Natural killer cell (primary cell): ENCODE measurements at regions of chr5 and their contacts with region 1.

Region 1: GRCh38 chr5:173615884-173616576 is 420 bp downstream of the BOD1 start:
- DNase-seq: peak; percentile 61 to 87
- ATAC-seq: peak; percentile 59 to 78 (median 61)
- H3K4me3 ChIP-seq: peak overlapping the region; percentile 77
- H3K4me3 Mint-ChIP-seq: peak overlapping the region; percentile 84
- H3K27ac ChIP-seq: peak overlapping the region; percentile 84
- H3K27ac Mint-ChIP-seq: peak overlapping the region; percentile 88 to 93
- H3K4me1 ChIP-seq: peaks cover 11% of the 10 kb centered on the region
- H3K4me1 Mint-ChIP-seq: peaks cover 28 to 32% of the 10 kb centered on the region in 2 donors
- H3K27me3 ChIP-seq: no peaks in the 10 kb centered on the region
- H3K27me3 Mint-ChIP-seq: no peaks in the 10 kb centered on the region
- CTCF ChIP-seq: peak; percentile 73

Region 2: DNA sequence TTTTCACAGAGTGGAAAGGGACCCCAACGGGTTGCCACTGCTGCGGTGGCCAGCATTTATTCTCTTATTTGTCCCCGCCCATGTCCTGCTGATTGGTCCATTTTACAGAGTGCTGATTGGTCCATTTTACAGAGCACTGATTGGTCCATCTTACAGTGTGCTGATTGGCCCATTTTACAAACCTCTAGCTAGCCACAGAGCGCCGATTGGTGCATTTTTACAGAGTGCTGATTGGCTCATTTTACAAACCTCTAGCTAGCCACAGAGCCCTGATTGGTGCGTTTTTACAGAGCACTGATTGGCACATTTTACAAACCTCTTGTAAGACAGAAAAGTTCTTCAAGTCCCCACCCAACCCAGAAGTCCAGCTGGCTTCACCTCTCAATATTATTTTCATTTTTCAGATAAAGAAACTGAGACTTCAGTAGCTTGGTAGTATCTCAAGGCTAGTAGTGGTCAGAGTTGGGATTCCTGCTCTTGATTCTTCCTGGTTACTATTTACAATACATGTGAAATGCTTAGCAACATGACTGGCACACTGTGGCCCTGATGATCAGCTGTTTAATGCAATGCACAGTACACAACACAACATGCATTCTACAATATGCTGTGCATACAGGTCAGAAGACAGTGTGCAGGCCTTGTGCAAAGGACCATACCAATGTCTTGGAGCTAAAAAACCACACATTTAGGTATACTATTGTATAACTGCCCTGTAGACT is 64.0 kb after region 1 on chr5:
- intact Hi-C with region 1: no loop called
- DNase-seq: no peak
- ATAC-seq: peak in 1 of 3 donors; percentile 41
- H3K4me3 ChIP-seq: no peak overlapping the region
- H3K4me3 Mint-ChIP-seq: no peak overlapping the region
- H3K27ac ChIP-seq: peak overlapping the region; percentile 27
- H3K27ac Mint-ChIP-seq: no peak overlapping the region
- H3K4me1 ChIP-seq: no peaks in the 10 kb centered on the region
- H3K4me1 Mint-ChIP-seq: no peaks in the 10 kb centered on the region
- H3K27me3 ChIP-seq: no peaks in the 10 kb centered on the region
- H3K27me3 Mint-ChIP-seq: peaks cover 0 to 5% of the 10 kb centered on the region in 2 donors
- CTCF ChIP-seq: no peak

Region 3: GRCh38 chr5:173887610-173888472 is 271.8 kb after region 1 on chr5 and contains the start of gene CPEB4:
- intact Hi-C with region 1: loop called (anchors 1 kb)
- DNase-seq: peak; percentile 94 to 100
- ATAC-seq: peak; percentile 94 to 98 (median 94)
- H3K4me3 ChIP-seq: peak within 1 kb of the TSS; percentile 95
- H3K4me3 Mint-ChIP-seq: peak within 1 kb of the TSS; percentile 99
- H3K27ac ChIP-seq: peak within 1 kb of the TSS; percentile 83
- H3K27ac Mint-ChIP-seq: peak within 1 kb of the TSS; percentile 99
- H3K4me1 ChIP-seq: peaks cover 42% of the 10 kb centered on the region
- H3K4me1 Mint-ChIP-seq: peaks cover 79 to 83% of the 10 kb centered on the region in 2 donors
- H3K27me3 ChIP-seq: no peaks in the 10 kb centered on the region
- H3K27me3 Mint-ChIP-seq: no peaks in the 10 kb centered on the region
- CTCF ChIP-seq: no peak
- total RNA-seq, gene CPEB4: 44.4 to 60.4 (median 55.1) TPM

Region 4: DNA sequence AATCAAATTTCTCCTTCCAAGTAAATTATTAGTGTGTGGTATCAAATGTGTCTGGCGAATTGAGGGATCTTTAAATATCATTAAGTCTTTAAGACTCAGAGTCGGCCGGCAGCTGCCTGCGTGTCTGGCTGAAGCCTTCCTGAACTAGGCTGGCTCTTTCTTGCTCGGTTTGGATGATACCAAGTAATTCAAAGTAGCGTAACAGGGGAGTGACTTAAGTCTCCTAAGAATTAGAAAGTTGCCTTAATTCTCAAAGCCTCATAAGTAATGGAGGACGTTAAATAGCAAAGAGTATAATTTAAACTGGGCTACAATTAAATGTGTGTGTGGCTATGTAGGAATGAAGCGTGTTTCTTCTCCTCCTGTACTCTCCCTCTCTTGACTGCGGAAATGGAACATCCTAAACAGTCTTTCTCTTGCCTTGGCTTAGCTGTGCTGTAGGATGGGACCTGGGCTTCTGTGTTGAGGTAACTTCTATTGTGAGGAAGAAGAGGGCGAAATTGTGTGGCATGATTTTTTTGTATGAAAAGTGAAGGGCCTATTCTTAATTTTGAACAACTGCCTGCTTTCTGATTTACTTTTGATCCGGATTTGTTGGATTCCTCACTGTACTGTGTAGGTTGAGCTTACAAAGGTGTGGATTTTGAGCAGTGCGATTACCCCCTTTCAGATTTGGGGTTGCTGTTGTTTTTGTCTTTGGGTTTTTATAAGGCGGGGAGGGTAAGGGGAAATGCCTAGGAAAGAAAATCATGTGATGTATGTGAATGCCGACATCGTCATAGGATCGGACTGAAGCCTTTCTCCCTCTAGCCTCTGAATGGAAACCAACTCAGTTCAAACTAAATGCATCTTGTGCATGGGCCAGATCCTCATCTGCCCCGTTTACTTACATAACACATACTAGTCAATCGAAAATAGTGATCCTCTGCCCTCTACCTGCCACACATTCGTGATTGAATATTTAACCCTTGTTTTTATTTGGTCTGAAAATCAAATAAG is 302.1 kb after region 1 on chr5:
- intact Hi-C with region 1: loop called (anchors 1 kb)
- DNase-seq: peak; percentile 32 to 86
- ATAC-seq: peak; percentile 87 to 93 (median 90)
- H3K4me3 ChIP-seq: peak overlapping the region; percentile 36
- H3K4me3 Mint-ChIP-seq: no peak overlapping the region
- H3K27ac ChIP-seq: peak overlapping the region; percentile 79
- H3K27ac Mint-ChIP-seq: no peak overlapping the region
- H3K4me1 ChIP-seq: peaks cover 4% of the 10 kb centered on the region
- H3K4me1 Mint-ChIP-seq: no peaks in the 10 kb centered on the region
- H3K27me3 ChIP-seq: no peaks in the 10 kb centered on the region
- H3K27me3 Mint-ChIP-seq: no peaks in the 10 kb centered on the region
- CTCF ChIP-seq: no peak

Region 5: DNA sequence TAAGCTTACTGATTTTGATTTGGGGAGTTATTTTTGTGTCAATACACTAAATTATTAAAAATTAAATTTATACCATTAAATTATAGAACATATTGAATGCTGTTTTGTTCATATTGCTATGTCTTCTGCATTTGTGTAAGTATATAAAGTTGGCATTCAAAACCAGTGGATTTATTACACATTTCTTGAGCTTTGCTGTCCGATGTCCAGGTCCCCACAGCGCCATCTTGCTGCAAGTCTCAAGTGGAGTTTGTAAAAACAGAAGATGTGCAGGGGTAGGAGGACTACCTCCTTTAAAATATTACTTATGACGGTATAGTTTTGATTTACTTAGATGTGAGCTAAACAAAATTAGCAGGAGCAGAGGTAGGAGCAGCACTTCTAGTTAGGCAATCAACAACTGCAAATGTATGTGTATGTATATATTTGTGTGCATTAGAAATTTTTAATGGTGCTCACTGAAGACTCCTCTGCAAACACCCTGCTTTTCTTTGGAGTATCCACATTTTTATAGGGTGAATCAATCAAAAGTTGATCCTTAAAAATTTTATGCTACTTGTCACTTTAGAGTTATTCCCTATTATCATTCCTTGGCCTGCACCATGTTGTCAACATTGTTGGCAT is 309.5 kb after region 1 on chr5:
- intact Hi-C with region 1: loop called (anchors 1 kb)
- DNase-seq: peak in 1 of 2 donors; percentile 74
- ATAC-seq: peak in 2 of 3 donors; percentile 49 to 61
- H3K4me3 ChIP-seq: no peak overlapping the region
- H3K4me3 Mint-ChIP-seq: no peak overlapping the region
- H3K27ac ChIP-seq: no peak overlapping the region
- H3K27ac Mint-ChIP-seq: no peak overlapping the region
- H3K4me1 ChIP-seq: no peaks in the 10 kb centered on the region
- H3K4me1 Mint-ChIP-seq: peaks cover 7 to 16% of the 10 kb centered on the region in 2 donors
- H3K27me3 ChIP-seq: no peaks in the 10 kb centered on the region
- H3K27me3 Mint-ChIP-seq: no peaks in the 10 kb centered on the region
- CTCF ChIP-seq: peak; percentile 57

Region 6: DNA sequence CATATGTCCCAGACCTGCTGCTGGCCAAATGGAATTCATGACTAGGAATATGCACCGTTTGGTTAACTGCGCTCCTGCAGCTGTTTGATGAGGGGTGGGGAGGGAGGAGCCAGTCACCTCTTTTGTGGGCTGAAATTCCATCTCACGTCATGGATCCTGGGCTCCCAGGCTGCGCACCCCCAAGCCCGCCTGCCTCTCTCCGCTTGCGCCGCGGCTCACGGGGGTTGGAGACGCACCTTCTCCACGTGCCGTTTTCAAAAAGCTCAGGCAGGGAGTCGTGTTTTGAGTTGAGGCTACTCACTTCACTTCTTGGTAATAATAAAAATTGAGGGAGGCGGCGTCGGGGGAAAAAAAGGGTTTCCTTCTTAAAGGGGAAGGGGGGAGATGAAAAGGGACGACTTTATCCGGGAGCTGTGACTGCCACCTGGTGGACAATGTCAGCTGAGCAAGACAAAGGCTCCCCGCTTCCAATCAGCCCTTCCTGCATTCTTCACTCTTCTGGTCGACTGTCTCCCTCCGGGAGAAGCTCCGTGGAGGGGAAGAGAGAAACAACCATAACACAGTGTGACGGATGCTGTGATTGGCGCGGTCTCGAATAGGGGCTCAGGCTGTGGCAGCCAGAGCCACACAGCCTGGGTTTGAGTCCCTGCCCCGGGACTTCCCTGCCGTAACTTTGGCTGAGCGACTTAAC is 357.0 kb after region 1 on chr5:
- intact Hi-C with region 1: loop called (anchors 1 kb)
- DNase-seq: peak; percentile 61 to 88
- ATAC-seq: peak; percentile 81 to 92 (median 88)
- H3K4me3 ChIP-seq: peak overlapping the region; percentile 10
- H3K4me3 Mint-ChIP-seq: peak overlapping the region; percentile 77
- H3K27ac ChIP-seq: no peak overlapping the region
- H3K27ac Mint-ChIP-seq: peak overlapping the region in 1 of 2 donors; percentile 31
- H3K4me1 ChIP-seq: peaks cover 12% of the 10 kb centered on the region
- H3K4me1 Mint-ChIP-seq: peaks cover 8 to 13% of the 10 kb centered on the region in 2 donors
- H3K27me3 ChIP-seq: no peaks in the 10 kb centered on the region
- H3K27me3 Mint-ChIP-seq: peaks cover 30 to 39% of the 10 kb centered on the region in 2 donors
- CTCF ChIP-seq: peak; percentile 76

Region 7: GRCh38 chr5:174311531-174312269 is 695.7 kb after region 1 on chr5:
- intact Hi-C with region 1: loop called (anchors 5 kb)
- DNase-seq: peak; percentile 22 to 66
- ATAC-seq: peak in 2 of 3 donors; percentile 55 to 77
- H3K4me3 ChIP-seq: no peak overlapping the region
- H3K4me3 Mint-ChIP-seq: no peak overlapping the region
- H3K27ac ChIP-seq: no peak overlapping the region
- H3K27ac Mint-ChIP-seq: no peak overlapping the region
- H3K4me1 ChIP-seq: peaks cover 3% of the 10 kb centered on the region
- H3K4me1 Mint-ChIP-seq: peaks cover 0 to 5% of the 10 kb centered on the region in 2 donors
- H3K27me3 ChIP-seq: peaks cover 4% of the 10 kb centered on the region
- H3K27me3 Mint-ChIP-seq: peaks cover 16 to 23% of the 10 kb centered on the region in 2 donors
- CTCF ChIP-seq: peak; percentile 49

Region 8: DNA sequence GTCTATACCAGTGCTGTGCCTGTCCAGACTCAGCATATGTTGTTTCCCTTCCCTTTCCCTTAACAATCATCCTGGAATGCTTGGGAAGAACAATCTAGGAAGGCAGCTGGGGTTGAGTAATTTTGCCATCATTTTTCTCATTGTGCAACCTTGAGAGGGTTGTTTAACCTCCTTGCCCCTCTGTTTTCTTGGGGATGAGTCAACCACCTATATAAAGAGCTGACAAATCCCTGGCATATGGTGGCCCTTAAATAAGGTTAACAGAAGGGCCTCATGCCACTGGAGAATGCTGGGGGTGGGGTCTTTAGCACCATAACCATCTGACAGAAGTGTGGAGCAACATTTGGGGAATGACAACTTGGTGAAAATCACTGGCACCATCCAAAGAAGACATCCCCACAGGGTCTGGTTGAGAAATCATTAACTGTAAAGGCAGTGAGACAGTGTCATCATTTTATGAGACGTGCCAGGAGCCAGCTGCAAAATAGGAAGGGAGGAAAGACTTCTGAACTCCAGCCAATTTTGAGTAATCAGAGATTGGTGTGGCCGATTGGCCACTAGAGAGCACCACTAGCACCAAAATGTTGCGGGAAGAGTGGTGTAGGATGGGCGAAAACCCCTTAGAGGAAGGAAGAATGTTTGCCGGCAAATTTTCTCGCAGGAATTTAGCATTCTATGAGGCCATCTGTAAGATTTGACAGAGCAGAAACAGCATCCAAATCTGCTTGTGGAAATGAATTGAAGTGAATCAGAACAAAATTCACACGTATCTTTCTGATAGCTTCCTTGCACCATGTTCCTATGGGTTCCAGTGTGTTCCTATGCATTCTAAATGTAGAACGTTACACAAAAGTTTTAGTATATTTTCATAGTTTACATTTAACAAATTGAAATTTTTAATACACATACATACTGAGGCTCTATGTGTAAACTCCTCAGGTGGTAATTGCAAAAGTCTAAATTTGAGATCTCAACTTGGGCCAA is 1222.2 kb after region 1 on chr5:
- intact Hi-C with region 1: no loop called
- DNase-seq: no peak
- ATAC-seq: no peak
- H3K4me3 ChIP-seq: no peak overlapping the region
- H3K4me3 Mint-ChIP-seq: no peak overlapping the region
- H3K27ac ChIP-seq: no peak overlapping the region
- H3K27ac Mint-ChIP-seq: no peak overlapping the region
- H3K4me1 ChIP-seq: no peaks in the 10 kb centered on the region
- H3K4me1 Mint-ChIP-seq: no peaks in the 10 kb centered on the region
- H3K27me3 ChIP-seq: no peaks in the 10 kb centered on the region
- H3K27me3 Mint-ChIP-seq: peaks cover 0 to 11% of the 10 kb centered on the region in 2 donors
- CTCF ChIP-seq: no peak